ENCODE measurements at regions of chr14 and their contacts with region 1.

Region 1: GRCh38 chr14:62162998-62163589 is 400.9 kb downstream of the SNAPC1 start:
- DNase-seq: peak in 1 of 2 donors; percentile 46
- ATAC-seq: peak in 1 of 3 donors; percentile 72
- H3K4me3 ChIP-seq: no peak overlapping the region
- H3K4me3 Mint-ChIP-seq: no peak overlapping the region
- H3K27ac ChIP-seq: no peak overlapping the region
- H3K27ac Mint-ChIP-seq: no peak overlapping the region
- H3K4me1 ChIP-seq: no peaks in the 10 kb centered on the region
- H3K4me1 Mint-ChIP-seq: no peaks in the 10 kb centered on the region
- H3K27me3 ChIP-seq: peaks cover 5% of the 10 kb centered on the region
- H3K27me3 Mint-ChIP-seq: peaks cover 26 to 64% of the 10 kb centered on the region in 2 donors
- CTCF ChIP-seq: peak; percentile 66

Region 2: GRCh38 chr14:62064751-62065323 is 98.3 kb before region 1 on chr14:
- intact Hi-C with region 1: no loop called
- DNase-seq: no peak
- ATAC-seq: no peak
- H3K4me3 ChIP-seq: no peak overlapping the region
- H3K4me3 Mint-ChIP-seq: no peak overlapping the region
- H3K27ac ChIP-seq: no peak overlapping the region
- H3K27ac Mint-ChIP-seq: no peak overlapping the region
- H3K4me1 ChIP-seq: no peaks in the 10 kb centered on the region
- H3K4me1 Mint-ChIP-seq: peaks cover 0 to 8% of the 10 kb centered on the region in 2 donors
- H3K27me3 ChIP-seq: no peaks in the 10 kb centered on the region
- H3K27me3 Mint-ChIP-seq: peaks cover 0 to 10% of the 10 kb centered on the region in 2 donors
- CTCF ChIP-seq: no peak

Region 3: DNA sequence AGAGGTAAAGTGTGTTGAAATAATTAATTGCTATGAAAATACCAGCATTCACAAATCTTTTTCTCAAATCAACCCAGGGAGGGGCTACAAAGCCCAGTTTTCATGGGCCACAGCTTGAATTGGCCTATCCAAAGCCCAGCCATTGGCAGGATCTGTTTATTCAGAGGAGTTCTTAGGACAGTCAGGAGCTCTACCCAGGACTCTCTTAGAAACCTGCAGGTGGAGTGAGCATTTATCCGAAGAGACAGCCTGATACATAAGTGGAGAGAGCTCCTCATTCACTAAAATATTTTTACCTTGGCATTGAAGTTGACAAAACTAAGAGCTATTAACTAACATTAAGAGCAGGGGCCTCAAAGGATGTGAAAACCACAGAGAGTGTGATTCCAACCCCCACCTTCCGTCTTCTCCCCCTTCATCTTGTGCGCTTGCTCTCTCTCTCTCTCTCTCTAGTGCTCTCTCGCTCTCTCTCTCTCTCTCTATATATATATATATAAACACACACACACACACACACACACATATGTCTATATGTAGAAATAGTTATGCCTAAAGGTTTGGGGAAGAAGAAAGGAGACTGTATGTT is 85.3 kb before region 1 on chr14:
- intact Hi-C with region 1: no loop called
- DNase-seq: peak in 1 of 2 donors; percentile 64
- ATAC-seq: peak; percentile 68 to 92 (median 87)
- H3K4me3 ChIP-seq: no peak overlapping the region
- H3K4me3 Mint-ChIP-seq: peak overlapping the region; percentile 79
- H3K27ac ChIP-seq: peak overlapping the region; percentile 69
- H3K27ac Mint-ChIP-seq: peak overlapping the region; percentile 75 to 91
- H3K4me1 ChIP-seq: peaks cover 31% of the 10 kb centered on the region
- H3K4me1 Mint-ChIP-seq: peaks cover 49 to 51% of the 10 kb centered on the region in 2 donors
- H3K27me3 ChIP-seq: no peaks in the 10 kb centered on the region
- H3K27me3 Mint-ChIP-seq: peaks cover 0 to 2% of the 10 kb centered on the region in 2 donors
- CTCF ChIP-seq: no peak

Region 4: GRCh38 chr14:62800577-62800976 is 637.5 kb after region 1 on chr14:
- intact Hi-C with region 1: no loop called
- DNase-seq: no peak
- ATAC-seq: no peak
- H3K4me3 ChIP-seq: no peak overlapping the region
- H3K4me3 Mint-ChIP-seq: no peak overlapping the region
- H3K27ac ChIP-seq: no peak overlapping the region
- H3K27ac Mint-ChIP-seq: no peak overlapping the region
- H3K4me1 ChIP-seq: no peaks in the 10 kb centered on the region
- H3K4me1 Mint-ChIP-seq: no peaks in the 10 kb centered on the region
- H3K27me3 ChIP-seq: no peaks in the 10 kb centered on the region
- H3K27me3 Mint-ChIP-seq: no peaks in the 10 kb centered on the region
- CTCF ChIP-seq: no peak

Region 5: GRCh38 chr14:63760014-63760413 is 1596.9 kb after region 1 on chr14:
- intact Hi-C with region 1: loop called (anchors 10 kb)
- DNase-seq: peak in 1 of 2 donors; percentile 10
- ATAC-seq: peak in 2 of 3 donors; percentile 38 to 56
- H3K4me3 ChIP-seq: no peak overlapping the region
- H3K4me3 Mint-ChIP-seq: peak overlapping the region; percentile 80
- H3K27ac ChIP-seq: peak overlapping the region; percentile 75
- H3K27ac Mint-ChIP-seq: peak overlapping the region; percentile 87
- H3K4me1 ChIP-seq: peaks cover 10% of the 10 kb centered on the region
- H3K4me1 Mint-ChIP-seq: peaks cover 8 to 10% of the 10 kb centered on the region in 2 donors
- H3K27me3 ChIP-seq: no peaks in the 10 kb centered on the region
- H3K27me3 Mint-ChIP-seq: no peaks in the 10 kb centered on the region
- CTCF ChIP-seq: no peak

Measured in natural killer cell (primary cell).